ENCODE measurements at regions of chr9 and their contacts with region 1.

Region 1: DNA sequence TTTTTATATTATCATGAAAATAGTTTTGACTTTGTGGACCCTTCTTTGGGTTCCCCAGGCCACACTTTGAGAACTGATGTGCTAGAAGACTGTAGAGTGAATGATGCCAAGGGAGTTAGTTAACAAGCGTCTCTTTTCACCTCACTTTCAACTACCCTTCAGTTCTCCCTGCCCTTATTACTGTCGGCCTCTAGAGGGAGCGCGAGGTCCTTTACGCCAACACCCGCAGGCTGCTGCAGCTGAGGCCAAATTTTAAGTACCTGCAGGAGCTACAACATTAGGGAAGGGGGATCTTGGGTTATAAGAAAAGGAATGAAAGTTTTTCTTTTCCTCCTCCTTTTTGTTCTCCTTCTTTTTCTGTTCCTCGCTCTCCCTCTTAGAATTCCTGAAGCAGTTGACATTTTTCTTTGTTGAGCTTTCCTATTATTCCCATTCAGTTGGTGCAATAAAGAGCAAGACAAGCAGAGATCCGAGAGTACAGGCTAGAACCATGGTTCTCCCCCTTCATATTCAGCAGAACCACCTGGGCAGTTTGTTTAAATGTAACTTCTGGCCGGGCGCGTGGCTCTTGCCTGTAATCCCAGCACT is 84.0 kb downstream of the ZFAND5 start:
- ATAC-seq: peak; percentile 66 to 96 (median 86)
- H3K4me3 ChIP-seq: no peak overlapping the region
- H3K27ac ChIP-seq: no peak overlapping the region
- H3K4me1 ChIP-seq: no peaks in the 10 kb centered on the region

Region 2: DNA sequence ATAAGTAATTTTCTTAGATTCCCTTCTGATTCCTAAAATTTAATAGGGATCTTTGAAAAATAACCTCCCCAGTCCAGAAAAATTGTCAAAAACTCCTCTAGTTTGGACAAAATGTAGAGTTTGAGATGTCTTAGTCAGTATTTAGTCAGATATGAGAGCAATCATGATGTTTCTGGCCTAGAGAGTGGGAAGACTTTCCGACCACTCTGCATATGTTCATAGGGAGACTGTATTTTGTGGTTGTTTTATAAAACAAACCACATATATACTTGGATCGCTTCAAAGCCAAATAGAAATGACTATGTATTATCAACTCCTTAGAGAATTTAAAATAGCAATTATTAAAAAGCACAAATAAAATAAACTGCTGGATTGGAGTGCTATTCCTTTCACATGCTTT is 68.2 kb after region 1 on chr9:
- in situ Hi-C with region 1: no loop called
- ATAC-seq: no peak
- H3K4me3 ChIP-seq: no peak overlapping the region
- H3K27ac ChIP-seq: no peak overlapping the region
- H3K4me1 ChIP-seq: no peaks in the 10 kb centered on the region

Region 3: DNA sequence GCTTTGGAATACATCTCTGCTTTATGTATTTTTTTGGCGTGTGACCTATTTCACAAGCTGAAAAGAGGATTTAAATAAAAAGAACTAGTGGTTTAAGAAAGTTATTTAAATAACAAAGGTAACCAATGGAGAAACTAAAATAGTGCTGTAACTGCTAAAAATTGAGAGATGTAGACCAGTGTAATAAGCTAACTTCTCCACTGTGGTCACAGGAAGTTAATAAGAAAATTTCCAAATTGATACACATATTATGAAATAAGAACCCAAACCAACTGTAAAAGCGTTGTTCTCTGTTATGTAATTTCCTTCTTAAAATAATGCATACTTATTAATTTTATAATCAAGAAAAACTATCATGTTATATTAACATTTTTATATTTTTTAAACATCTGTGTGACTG is 113.1 kb after region 1 on chr9:
- in situ Hi-C with region 1: no loop called
- ATAC-seq: no peak
- H3K4me3 ChIP-seq: no peak overlapping the region
- H3K27ac ChIP-seq: no peak overlapping the region
- H3K4me1 ChIP-seq: no peaks in the 10 kb centered on the region

Region 4: GRCh38 chr9:72807765-72808445 is 526.9 kb after region 1 on chr9:
- in situ Hi-C with region 1: loop called in 5 of 9 experiments (anchors 25 kb)
- ATAC-seq: peak in 1 of 8 experiments; percentile 29
- H3K4me3 ChIP-seq: no peak overlapping the region
- H3K27ac ChIP-seq: no peak overlapping the region
- H3K4me1 ChIP-seq: peaks cover 0 to 6% of the 10 kb centered on the region in 2 donors

Measured in motor neuron (in vitro differentiated cells).